Motor neuron (in vitro differentiated cells): ENCODE measurements at regions of chr5 and their contacts with region 1.

Region 1: GRCh38 chr5:16934123-16934522 is 2.0 kb downstream of the MYO10 start:
- ATAC-seq: peak; percentile 20 to 53 (median 38)
- H3K4me3 ChIP-seq: peak overlapping the region; percentile 20 to 94 (median 79)
- H3K27ac ChIP-seq: no peak overlapping the region
- H3K4me1 ChIP-seq: peaks cover 6% of the 10 kb centered on the region in 2 donors

Region 2: DNA sequence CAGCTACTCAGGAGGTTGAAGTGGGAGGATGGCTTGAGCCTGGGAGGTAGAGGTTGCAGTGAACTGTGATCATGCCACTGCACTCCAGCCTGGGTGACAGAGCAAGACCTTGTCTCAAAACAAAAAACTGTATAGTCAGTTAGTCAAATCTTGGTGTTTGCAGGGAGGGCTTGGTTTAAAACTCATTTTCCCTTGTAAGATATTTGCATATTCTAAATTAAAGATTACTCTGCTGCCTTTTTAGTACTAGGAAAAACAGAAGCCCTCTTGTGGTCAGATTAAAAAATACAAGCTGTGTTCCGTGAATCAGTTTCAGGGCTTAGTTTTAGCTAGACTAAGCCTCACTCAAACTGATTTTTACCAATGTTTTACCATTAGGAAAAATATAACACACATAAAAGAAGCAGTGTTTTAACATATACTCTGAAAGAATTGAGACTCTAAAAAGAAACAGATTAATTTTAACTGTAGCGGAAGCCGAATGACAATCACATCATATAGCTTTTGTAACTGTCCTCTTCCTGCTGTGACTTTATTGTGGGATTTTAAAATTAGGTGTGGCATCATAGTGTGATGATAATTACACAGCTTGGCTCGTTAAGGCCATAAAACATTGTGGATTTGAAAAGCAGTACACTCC is 198.4 kb after region 1 on chr5:
- in situ Hi-C with region 1: loop called in 1 of 9 experiments (anchors 25 kb)
- ATAC-seq: peak in 3 of 8 experiments; percentile 35 to 52 (median 46)
- H3K4me3 ChIP-seq: no peak overlapping the region
- H3K27ac ChIP-seq: no peak overlapping the region
- H3K4me1 ChIP-seq: peaks cover 0 to 4% of the 10 kb centered on the region in 2 donors